Mammary epithelial cell (primary cell): ENCODE measurements at regions of chr5 and their contacts with region 1.

Region 1: DNA sequence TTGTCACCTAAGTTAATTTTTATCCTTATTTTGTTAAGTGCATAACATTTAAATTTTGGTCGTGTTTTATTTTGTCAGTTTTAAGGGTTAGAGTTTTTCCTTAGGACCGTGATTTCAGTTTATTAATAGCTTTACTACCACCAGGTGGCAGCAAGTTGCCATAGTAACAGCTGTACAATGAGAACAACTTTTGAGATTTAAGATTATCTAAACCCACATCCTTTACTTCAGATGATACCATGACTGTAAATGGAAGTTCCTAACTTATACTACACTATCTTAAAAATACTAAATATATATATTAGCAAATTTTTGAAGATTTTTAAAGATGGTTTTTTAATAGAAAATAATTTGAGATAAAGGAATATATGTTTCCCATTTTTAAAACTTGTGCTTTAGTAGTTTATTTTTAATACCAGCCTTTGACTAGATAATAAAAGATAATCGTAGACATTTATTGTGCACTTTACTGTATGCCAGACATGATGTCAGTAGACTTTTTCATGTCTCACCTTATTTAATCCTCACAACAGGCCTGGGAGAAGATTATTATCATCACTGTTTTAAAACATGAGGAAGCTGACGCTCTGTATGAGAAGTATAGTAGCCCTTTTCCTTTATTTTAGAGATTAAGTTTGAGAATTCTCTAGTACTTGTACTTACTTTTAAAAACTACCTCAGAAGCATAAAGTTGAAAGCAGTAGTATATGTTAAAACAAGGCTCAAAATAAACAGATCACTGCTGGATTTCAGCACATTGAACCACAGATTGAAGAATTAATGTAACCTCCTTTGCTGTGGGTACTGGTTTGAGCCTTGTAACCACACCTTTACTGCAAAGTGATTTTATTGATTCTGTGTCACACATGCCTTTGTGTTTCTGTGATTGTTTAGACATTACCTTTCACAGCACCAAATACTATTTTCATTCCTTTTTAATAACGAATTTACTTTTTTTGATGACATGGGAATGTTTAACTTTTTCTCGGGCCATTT is 27.5 kb downstream of the SREK1 start:
- DNase-seq: peak; percentile 43
- H3K4me3 ChIP-seq: no peak overlapping the region
- H3K27ac ChIP-seq: peak overlapping the region; percentile 55
- H3K4me1 ChIP-seq: no peaks in the 10 kb centered on the region
- H3K27me3 ChIP-seq: no peaks in the 10 kb centered on the region
- CTCF ChIP-seq: peak; percentile 43 to 60

Region 2: GRCh38 chr5:65742565-65743231 is 428.9 kb before region 1 on chr5:
- CTCF ChIA-PET with region 1: no interaction called
- dilution Hi-C with region 1: no loop called
- in situ Hi-C with region 1: no loop called
- intact Hi-C with region 1: loop called (anchors 10 kb)
- DNase-seq: peak; percentile 76
- H3K4me3 ChIP-seq: no peak overlapping the region
- H3K27ac ChIP-seq: peak overlapping the region; percentile 11
- H3K4me1 ChIP-seq: peaks cover 4% of the 10 kb centered on the region
- H3K27me3 ChIP-seq: no peaks in the 10 kb centered on the region
- CTCF ChIP-seq: peak; percentile 75 to 82

Region 3: GRCh38 chr5:66209350-66209749 is 37.7 kb after region 1 on chr5:
- CTCF ChIA-PET with region 1: interaction called, 6 read pairs
- dilution Hi-C with region 1: no loop called
- in situ Hi-C with region 1: no loop called
- intact Hi-C with region 1: loop called (anchors 1 kb)
- DNase-seq: peak; percentile 93
- H3K4me3 ChIP-seq: no peak overlapping the region
- H3K27ac ChIP-seq: peak overlapping the region; percentile 56
- H3K4me1 ChIP-seq: peaks cover 30% of the 10 kb centered on the region
- H3K27me3 ChIP-seq: no peaks in the 10 kb centered on the region
- CTCF ChIP-seq: peak; percentile 27 to 49

Region 4: DNA sequence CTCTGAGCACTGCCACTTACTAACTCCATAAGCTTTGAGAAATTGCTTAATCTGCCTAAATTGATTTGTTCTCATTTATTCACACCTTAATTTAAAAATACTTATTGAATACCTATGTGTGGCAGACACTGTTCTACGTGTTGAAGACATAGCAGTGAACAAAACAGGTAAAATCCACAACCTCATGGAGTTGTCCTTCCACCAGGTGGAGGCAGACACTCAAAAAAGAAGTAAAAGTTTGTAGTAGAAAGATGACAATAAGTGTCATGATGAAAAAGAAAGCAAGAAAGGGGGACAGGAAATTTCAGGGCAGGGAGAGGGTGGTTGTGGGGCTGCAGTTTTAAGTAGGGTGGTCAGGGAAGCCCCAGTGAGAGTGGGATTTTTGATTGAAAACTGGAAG is 67.4 kb after region 1 on chr5:
- CTCF ChIA-PET with region 1: interaction called, 11 read pairs
- dilution Hi-C with region 1: no loop called
- in situ Hi-C with region 1: no loop called
- intact Hi-C with region 1: no loop called
- DNase-seq: peak; percentile 32
- H3K4me3 ChIP-seq: no peak overlapping the region
- H3K27ac ChIP-seq: no peak overlapping the region
- H3K4me1 ChIP-seq: no peaks in the 10 kb centered on the region
- H3K27me3 ChIP-seq: peaks cover 4% of the 10 kb centered on the region
- CTCF ChIP-seq: peak; percentile 30 to 52

Region 5: GRCh38 chr5:66757188-66757833 is 585.7 kb after region 1 on chr5:
- CTCF ChIA-PET with region 1: no interaction called
- dilution Hi-C with region 1: no loop called
- in situ Hi-C with region 1: no loop called
- intact Hi-C with region 1: loop called (anchors 5 kb)
- DNase-seq: peak; percentile 34
- H3K4me3 ChIP-seq: no peak overlapping the region
- H3K27ac ChIP-seq: no peak overlapping the region
- H3K4me1 ChIP-seq: no peaks in the 10 kb centered on the region
- H3K27me3 ChIP-seq: peaks cover 2% of the 10 kb centered on the region
- CTCF ChIP-seq: peak; percentile 32 to 56